GM12878 (cell line): ENCODE measurements at regions of chr3 and their contacts with region 1.

Region 1: DNA sequence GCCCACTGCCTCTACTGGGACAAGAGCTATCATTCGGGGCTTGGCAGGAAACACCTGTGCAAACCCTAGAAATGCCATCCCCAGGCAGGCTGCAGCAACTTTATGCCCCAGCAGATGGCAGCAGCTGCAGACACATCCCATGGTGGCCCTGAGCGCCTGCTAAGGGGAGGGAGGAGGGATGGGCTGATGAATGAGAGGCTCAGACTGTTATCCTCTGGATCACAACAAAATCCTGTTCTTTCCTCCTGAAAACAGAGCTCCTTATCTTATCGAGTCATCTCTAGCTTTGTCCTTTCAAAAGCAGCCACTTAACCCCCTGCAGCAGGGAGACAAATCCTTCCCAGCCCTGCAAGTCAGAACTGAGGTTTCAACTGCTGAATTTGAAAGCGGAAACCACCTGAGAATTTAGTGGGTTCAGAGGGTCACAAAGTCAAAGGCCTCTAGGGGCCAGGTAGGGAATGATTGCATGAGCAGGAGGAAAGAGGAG is 90.6 kb upstream of the PROK2 start:
- DNase-seq: peak; percentile 50
- ATAC-seq: peak; percentile 98
- H3K4me3 ChIP-seq: no peak overlapping the region
- H3K27ac ChIP-seq: no peak overlapping the region
- H3K4me1 ChIP-seq: peaks cover 19% of the 10 kb centered on the region
- H3K27me3 ChIP-seq: no peaks in the 10 kb centered on the region
- CTCF ChIP-seq: peak; percentile 91 to 96 (median 96); a peak in 5 of 6 replicates
- EP300 ChIP-seq: no peak; a peak in 1 of 4 replicates
- POLR2A ChIP-seq: no peak
- RAD21 ChIP-seq: peak; percentile 93

Region 2: GRCh38 chr3:71621825-71622537 is 253.5 kb before region 1 on chr3:
- CTCF ChIA-PET with region 1: no interaction called
- POLR2A ChIA-PET with region 1: no interaction called
- RAD21 ChIA-PET with region 1: no interaction called
- SMC1A ChIA-PET with region 1: no interaction called
- in situ Hi-C with region 1: no loop called
- intact Hi-C with region 1: no loop called
- DNase-seq: no peak
- ATAC-seq: no peak
- H3K4me3 ChIP-seq: no peak overlapping the region
- H3K27ac ChIP-seq: no peak overlapping the region
- H3K4me1 ChIP-seq: no peaks in the 10 kb centered on the region
- H3K27me3 ChIP-seq: no peaks in the 10 kb centered on the region; a peak in 1 of 4 replicates
- CTCF ChIP-seq: no peak
- EP300 ChIP-seq: no peak
- POLR2A ChIP-seq: no peak
- RAD21 ChIP-seq: no peak

Region 3: DNA sequence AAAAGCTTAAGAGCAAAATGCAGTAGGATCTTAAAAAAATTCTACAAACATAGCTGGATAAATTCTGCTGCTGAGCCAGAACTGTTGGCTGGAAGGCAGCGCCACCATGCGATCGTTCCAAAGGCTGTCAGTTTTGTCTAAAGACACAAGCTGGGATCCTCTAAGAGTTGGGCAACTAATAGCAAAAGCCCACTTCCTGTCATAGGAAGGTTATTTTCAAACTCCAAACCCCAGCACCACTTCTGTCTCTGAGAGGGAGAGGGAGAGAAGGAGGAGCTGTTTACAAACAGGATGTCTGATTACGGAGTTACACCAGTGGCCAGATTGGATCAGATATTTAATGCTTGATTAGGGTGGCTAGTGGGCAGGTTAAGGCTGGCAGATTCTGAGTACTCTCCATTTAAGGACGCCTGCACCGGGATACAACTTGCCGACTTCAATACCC is 194.3 kb before region 1 on chr3:
- CTCF ChIA-PET with region 1: no interaction called
- POLR2A ChIA-PET with region 1: no interaction called
- RAD21 ChIA-PET with region 1: no interaction called
- SMC1A ChIA-PET with region 1: no interaction called
- in situ Hi-C with region 1: no loop called
- intact Hi-C with region 1: no loop called
- DNase-seq: no peak
- ATAC-seq: peak; percentile 89
- H3K4me3 ChIP-seq: no peak overlapping the region
- H3K27ac ChIP-seq: no peak overlapping the region
- H3K4me1 ChIP-seq: no peaks in the 10 kb centered on the region
- H3K27me3 ChIP-seq: peaks cover 0 to 6% of the 10 kb centered on the region in 2 experiments; a peak in 2 of 4 replicates
- CTCF ChIP-seq: peak; percentile 62 to 77 (median 64)
- EP300 ChIP-seq: no peak
- POLR2A ChIP-seq: no peak
- RAD21 ChIP-seq: peak; percentile 74

Region 4: GRCh38 chr3:71890356-71891215 is 15.1 kb after region 1 on chr3:
- CTCF ChIA-PET with region 1: interaction called, 22 read pairs
- POLR2A ChIA-PET with region 1: no interaction called
- RAD21 ChIA-PET with region 1: no interaction called
- SMC1A ChIA-PET with region 1: interaction called, 3 read pairs
- in situ Hi-C with region 1: no loop called
- intact Hi-C with region 1: no loop called
- DNase-seq: no peak
- ATAC-seq: no peak
- H3K4me3 ChIP-seq: no peak overlapping the region
- H3K27ac ChIP-seq: no peak overlapping the region
- H3K4me1 ChIP-seq: no peaks in the 10 kb centered on the region
- H3K27me3 ChIP-seq: no peaks in the 10 kb centered on the region; a peak in 1 of 4 replicates
- CTCF ChIP-seq: no peak
- EP300 ChIP-seq: no peak
- POLR2A ChIP-seq: no peak
- RAD21 ChIP-seq: no peak

Region 5: DNA sequence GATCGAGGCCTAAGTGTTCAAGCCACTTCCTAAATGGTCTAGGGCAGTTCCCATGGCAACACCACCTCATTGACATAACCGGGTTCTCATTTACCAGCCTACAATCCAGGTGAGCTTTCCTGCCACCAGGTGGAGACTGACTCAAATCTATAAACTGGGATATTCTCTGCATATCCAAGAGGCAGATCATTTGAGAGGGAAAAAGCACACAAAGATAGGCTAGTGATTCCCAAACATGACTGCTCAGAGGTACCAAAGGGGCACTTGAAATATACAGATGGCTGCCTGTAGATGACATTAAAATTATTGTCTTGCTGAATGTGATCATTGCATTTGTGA is 50.7 kb after region 1 on chr3:
- CTCF ChIA-PET with region 1: interaction called, 8 read pairs
- POLR2A ChIA-PET with region 1: no interaction called
- RAD21 ChIA-PET with region 1: interaction called, 10 read pairs
- SMC1A ChIA-PET with region 1: interaction called, 4 read pairs
- in situ Hi-C with region 1: no loop called
- intact Hi-C with region 1: loop called (anchors 5 kb)
- DNase-seq: no peak
- ATAC-seq: peak; percentile 71
- H3K4me3 ChIP-seq: no peak overlapping the region
- H3K27ac ChIP-seq: no peak overlapping the region
- H3K4me1 ChIP-seq: peaks cover 4% of the 10 kb centered on the region; the same call in 1 of the 2 replicates
- H3K27me3 ChIP-seq: no peaks in the 10 kb centered on the region
- CTCF ChIP-seq: peak; percentile 36 to 53 (median 51); a peak in 5 of 6 replicates
- EP300 ChIP-seq: no peak
- POLR2A ChIP-seq: no peak
- RAD21 ChIP-seq: peak; percentile 72

Region 6: DNA sequence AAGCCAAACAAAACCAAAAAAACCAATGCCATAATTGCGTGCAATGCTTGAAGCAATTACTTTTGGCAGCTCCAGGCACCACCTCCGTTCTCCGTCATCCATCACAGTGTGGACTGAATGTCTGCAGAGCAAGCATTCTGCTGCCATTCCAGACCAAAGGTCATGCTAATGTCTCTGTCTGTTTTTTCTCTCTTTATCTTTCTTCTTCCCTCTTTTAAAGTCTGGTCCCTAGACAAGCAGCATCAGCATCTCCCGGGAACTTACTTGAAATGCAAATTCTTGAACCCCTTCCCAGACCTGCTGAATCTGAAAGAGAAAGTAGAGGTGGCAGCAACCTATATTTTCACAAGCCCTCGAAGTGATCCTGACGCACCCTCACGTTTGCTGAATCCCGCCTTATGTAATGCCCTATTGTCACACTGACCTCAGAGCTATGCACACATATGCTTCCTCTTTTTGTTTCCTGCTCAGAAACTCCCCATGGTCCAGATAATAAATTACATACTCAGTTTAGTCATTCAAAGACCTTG is 206.7 kb after region 1 on chr3:
- CTCF ChIA-PET with region 1: interaction called, 11 read pairs
- POLR2A ChIA-PET with region 1: no interaction called
- RAD21 ChIA-PET with region 1: no interaction called
- SMC1A ChIA-PET with region 1: interaction called, 11 read pairs
- in situ Hi-C with region 1: no loop called
- intact Hi-C with region 1: loop called (anchors 5 kb)
- DNase-seq: peak; percentile 80
- ATAC-seq: peak; percentile 79
- H3K4me3 ChIP-seq: peak overlapping the region; percentile 33; the same call in 1 of the 2 replicates
- H3K27ac ChIP-seq: peak overlapping the region; percentile 78
- H3K4me1 ChIP-seq: peaks cover 71% of the 10 kb centered on the region
- H3K27me3 ChIP-seq: no peaks in the 10 kb centered on the region
- CTCF ChIP-seq: no peak
- EP300 ChIP-seq: peak; percentile 46 to 69; a peak in 2 of 4 replicates
- POLR2A ChIP-seq: no peak
- RAD21 ChIP-seq: no peak

Region 7: GRCh38 chr3:72259755-72260587 is 384.5 kb after region 1 on chr3:
- CTCF ChIA-PET with region 1: interaction called, 18 read pairs
- POLR2A ChIA-PET with region 1: no interaction called
- RAD21 ChIA-PET with region 1: interaction called, 14 read pairs
- SMC1A ChIA-PET with region 1: interaction called, 14 read pairs
- in situ Hi-C with region 1: no loop called
- intact Hi-C with region 1: loop called (anchors 1 kb)
- DNase-seq: no peak
- ATAC-seq: no peak; the same call in 2 of the 3 replicates
- H3K4me3 ChIP-seq: no peak overlapping the region
- H3K27ac ChIP-seq: no peak overlapping the region
- H3K4me1 ChIP-seq: peaks cover 22% of the 10 kb centered on the region
- H3K27me3 ChIP-seq: no peaks in the 10 kb centered on the region
- CTCF ChIP-seq: no peak
- EP300 ChIP-seq: no peak
- POLR2A ChIP-seq: no peak
- RAD21 ChIP-seq: no peak

Region 8: DNA sequence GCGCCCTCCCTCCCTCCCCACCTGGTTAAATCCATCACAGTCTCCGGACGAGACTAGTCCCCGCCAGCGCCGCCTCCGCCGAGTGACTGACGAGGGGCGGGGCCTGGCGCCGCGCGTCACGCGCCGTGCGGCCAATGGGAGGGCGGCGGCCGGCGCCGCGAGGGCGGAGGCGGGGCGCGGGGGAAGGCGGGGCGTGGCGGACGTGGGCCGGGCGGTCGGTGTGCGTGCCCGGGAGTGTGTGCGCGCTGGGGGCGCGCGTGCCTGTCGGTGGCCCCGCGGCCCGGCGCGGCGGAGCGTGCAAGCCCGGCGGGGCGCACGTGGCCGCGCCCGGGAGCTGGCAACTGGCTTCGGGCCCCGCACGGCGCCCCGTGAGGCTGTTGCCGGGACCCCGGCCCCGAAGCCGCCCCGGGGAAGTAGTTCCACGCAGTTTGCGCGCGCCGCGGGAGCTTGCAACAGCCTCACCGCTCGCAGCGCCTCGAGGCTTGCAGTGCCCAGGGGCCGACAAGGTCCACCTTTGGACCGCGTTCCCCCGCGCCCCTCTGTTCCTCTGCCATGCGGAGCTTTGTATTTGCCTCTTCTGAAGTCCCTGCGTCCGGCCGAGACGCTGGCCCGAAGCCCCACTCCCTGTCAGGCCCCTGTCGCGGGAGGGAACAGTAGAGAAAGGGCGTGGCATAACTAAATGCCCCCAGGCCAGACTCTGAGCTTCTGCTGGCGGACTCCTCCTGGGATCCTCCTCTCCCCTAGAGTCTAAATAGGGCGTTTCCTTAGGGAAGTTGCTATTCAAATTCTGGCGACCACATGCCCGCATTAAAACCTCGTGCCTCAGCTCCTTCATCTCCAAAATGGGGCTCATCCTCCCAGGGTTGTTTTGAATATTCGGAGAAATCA is 571.8 kb after region 1 on chr3:
- CTCF ChIA-PET with region 1: interaction called, 3 read pairs
- POLR2A ChIA-PET with region 1: no interaction called
- RAD21 ChIA-PET with region 1: no interaction called
- SMC1A ChIA-PET with region 1: no interaction called
- in situ Hi-C with region 1: no loop called
- intact Hi-C with region 1: loop called (anchors 10 kb)
- DNase-seq: no peak
- ATAC-seq: peak; percentile 81
- H3K4me3 ChIP-seq: peak overlapping the region; percentile 37; the same call in 1 of the 2 replicates
- H3K27ac ChIP-seq: no peak overlapping the region
- H3K4me1 ChIP-seq: peaks cover 6% of the 10 kb centered on the region; the same call in 1 of the 2 replicates
- H3K27me3 ChIP-seq: no peaks in the 10 kb centered on the region; a peak in 1 of 4 replicates
- CTCF ChIP-seq: no peak; a peak in 1 of 6 replicates
- EP300 ChIP-seq: no peak
- POLR2A ChIP-seq: no peak
- RAD21 ChIP-seq: no peak

Region 9: DNA sequence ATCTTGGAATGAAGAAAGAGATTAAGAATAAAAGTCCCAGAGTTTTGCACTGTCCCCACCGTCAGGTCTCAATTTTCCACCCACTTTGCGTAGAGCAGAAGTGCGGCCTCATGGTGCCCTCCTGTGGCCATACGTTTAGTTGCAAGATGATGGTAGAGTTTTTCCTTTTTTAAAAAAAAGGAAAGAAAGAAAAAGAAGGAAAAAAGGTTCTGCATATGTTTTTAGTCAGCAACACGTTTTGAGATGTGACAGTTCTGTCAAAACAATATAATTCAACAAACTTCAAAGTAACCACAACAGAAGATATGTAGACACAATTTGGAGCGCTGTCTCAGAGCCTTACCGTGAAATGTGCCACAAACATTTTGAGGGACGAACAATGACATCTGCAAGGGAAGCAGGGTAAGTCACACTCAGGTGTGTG is 1210.6 kb after region 1 on chr3:
- CTCF ChIA-PET with region 1: interaction called, 6 read pairs
- POLR2A ChIA-PET with region 1: no interaction called
- RAD21 ChIA-PET with region 1: interaction called, 5 read pairs
- SMC1A ChIA-PET with region 1: no interaction called
- in situ Hi-C with region 1: loop called (anchors 10 kb)
- intact Hi-C with region 1: no loop called
- DNase-seq: no peak
- ATAC-seq: peak; percentile 76
- H3K4me3 ChIP-seq: no peak overlapping the region
- H3K27ac ChIP-seq: no peak overlapping the region
- H3K4me1 ChIP-seq: no peaks in the 10 kb centered on the region
- H3K27me3 ChIP-seq: no peaks in the 10 kb centered on the region
- CTCF ChIP-seq: peak; percentile 67 to 89 (median 72)
- EP300 ChIP-seq: no peak
- POLR2A ChIP-seq: no peak
- RAD21 ChIP-seq: peak; percentile 98